BJ (cell line): ENCODE measurements at regions of chr1 and their contacts with region 1.

Region 1: GRCh38 chr1:192477630-192478029 is 97.9 kb upstream of the RGS1 start:
- DNase-seq: no peak
- H3K4me3 ChIP-seq: no peak overlapping the region
- H3K27me3 ChIP-seq: peaks cover 2% of the 10 kb centered on the region; the same call in 1 of the 2 replicates
- CTCF ChIP-seq: peak; percentile 43

Region 2: DNA sequence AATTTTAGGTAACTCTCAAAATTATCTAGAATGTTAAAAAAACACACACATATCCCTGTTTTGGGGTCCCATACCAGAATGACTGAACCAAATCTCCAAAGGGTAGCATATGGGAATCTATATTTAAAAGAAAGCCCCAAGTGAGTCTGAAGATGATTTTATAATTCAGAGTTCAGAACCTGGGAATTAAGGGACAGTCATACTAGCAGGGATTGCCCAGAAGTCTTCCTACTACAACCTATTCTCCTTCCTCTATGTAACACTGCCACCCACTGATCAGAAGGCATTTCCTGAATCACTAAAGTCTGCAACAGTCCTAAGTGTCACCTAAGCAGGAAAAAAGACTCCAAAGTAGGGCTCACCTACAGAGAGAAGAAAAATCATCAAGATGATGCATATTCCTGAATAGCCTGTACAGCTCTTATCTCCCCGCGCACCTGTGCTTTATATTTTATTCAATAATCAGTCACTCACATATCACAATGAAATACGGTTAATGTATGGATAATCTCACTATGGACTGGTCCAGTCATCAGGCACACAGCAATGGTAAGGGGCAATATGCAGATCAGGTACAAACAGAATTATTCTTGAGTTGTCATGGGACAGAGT is 102.8 kb after region 1 on chr1:
- CTCF ChIA-PET with region 1: interaction called, 22 read pairs
- POLR2A ChIA-PET with region 1: no interaction called
- DNase-seq: no peak
- H3K4me3 ChIP-seq: no peak overlapping the region
- H3K27me3 ChIP-seq: no peaks in the 10 kb centered on the region
- CTCF ChIP-seq: peak; percentile 47

Region 3: GRCh38 chr1:192609110-192610079 is 131.8 kb after region 1 on chr1:
- CTCF ChIA-PET with region 1: interaction called, 17 read pairs
- POLR2A ChIA-PET with region 1: no interaction called
- DNase-seq: no peak
- H3K4me3 ChIP-seq: no peak overlapping the region
- H3K27me3 ChIP-seq: no peaks in the 10 kb centered on the region
- CTCF ChIP-seq: no peak

Region 4: DNA sequence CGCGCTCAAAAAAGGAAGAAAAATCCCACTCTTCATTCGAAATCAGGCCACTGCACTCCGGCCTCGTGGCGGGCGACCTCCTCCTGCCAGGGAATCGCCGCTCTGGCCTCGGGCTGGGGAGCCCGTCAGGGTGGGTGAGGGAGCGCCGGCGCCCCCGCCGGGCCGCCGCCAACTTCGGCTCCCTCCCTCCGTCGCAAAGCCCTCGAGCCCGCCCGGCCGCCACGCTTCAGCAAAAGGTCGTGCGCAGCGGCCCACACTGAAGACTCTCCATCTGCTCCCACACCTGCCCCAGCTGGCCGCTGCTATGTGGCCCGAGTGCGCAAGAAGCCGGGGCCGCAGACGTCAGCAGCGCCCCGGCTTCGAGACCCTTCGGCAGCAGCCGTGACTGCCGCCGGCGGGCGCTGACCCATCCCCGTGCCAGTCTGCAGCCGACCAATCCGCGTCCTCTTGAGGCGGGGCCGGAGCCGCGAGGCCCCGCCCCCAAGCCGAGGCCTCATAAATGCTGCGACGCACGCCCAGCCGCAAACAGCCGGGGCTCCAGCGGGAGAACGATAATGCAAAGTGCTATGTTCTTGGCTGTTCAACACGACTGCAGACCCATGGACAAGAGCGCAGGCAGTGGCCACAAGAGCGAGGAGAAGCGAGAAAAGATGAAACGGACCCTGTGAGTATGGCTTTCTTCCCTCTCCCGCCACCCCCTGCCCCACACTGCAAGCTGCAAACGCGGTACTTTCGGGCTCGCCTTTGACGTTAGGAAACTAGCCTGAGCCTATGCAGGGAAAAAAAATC is 331.1 kb after region 1 on chr1 and contains the start of gene RGS2:
- CTCF ChIA-PET with region 1: interaction called, 14 read pairs
- POLR2A ChIA-PET with region 1: no interaction called
- DNase-seq: peak; percentile 60
- H3K4me3 ChIP-seq: peak within 1 kb of the TSS; percentile 79
- H3K27me3 ChIP-seq: no peaks in the 10 kb centered on the region
- CTCF ChIP-seq: no peak
- polyA plus RNA-seq, gene RGS2: 11.5 and 26.0 TPM in 2 replicates

Region 5: GRCh38 chr1:193019442-193020026 is 541.9 kb after region 1 on chr1:
- CTCF ChIA-PET with region 1: interaction called, 12 read pairs
- POLR2A ChIA-PET with region 1: no interaction called
- DNase-seq: no peak
- H3K4me3 ChIP-seq: no peak overlapping the region
- H3K27me3 ChIP-seq: no peaks in the 10 kb centered on the region
- CTCF ChIP-seq: peak; percentile 37; the same call in 1 of the 2 replicates